ENCODE measurements at regions of chr7 and their contacts with region 1.

Region 1: DNA sequence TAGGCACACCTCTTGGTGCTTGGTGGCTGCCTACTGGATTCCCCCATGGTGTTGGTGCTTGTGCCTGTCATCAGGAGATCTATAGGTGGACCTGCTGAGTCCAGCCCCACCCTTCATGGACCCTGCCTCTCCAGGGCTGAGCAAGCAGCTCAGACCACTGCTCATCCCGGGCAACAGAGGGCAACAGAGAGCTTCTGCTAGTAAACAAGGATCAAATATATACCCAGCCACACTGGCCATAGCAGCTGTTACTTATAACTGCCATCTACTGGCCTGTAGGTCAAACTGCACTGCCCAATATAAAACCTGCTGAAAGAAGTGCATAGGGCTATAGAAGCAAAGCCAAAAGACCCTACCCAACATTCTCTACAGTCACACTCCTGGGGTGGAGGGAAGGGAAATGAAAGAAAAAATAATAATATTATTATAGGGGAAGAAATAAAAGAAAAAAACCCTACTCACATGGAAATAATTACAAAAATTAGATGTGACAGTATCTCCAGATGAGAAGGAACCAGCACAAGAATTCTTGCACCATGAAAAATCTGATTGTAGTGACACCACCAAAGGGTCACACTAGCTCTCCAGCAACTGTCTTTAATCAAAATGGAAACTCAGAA is 54.9 kb upstream of the ZNF800 start:
- DNase-seq: peak; percentile 76
- H3K4me3 Mint-ChIP-seq: no peak overlapping the region
- H3K27ac Mint-ChIP-seq: no peak overlapping the region
- H3K4me1 Mint-ChIP-seq: peaks cover 23% of the 10 kb centered on the region
- H3K27me3 Mint-ChIP-seq: peaks cover 33% of the 10 kb centered on the region

Region 2: DNA sequence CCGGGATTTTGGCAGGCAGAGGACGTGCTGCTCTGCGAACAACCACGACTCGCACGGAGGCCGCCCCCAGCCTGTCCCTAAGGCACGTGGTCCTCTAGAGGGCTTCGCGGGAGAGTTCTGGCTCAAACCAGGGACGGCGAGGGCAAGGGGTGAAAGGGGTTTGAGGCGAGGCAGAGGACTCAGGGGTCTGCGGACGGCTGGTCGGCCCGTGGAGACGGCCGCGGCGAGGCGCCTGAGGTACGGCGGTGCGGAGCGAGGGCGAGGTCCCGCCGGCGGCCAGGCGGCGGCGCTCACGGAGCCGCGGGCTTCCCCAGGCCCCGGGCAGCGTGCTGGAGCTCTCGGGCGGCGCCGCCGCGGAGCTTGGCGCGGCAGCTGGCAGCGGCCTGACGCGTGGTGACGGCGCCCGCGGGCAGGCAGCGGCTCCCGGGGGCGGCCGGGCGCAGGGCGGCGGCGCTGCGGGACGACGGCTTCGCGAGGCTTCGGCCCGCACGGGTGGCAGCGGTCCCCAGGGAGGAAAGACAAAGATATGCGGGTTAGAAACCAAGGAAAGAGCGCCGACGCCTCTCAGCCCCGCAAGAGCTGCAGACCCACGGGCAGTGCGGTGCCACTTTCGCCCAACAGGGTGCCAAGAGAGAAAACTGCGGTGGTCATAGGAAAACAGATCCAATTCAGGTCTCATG is 99.7 kb before region 1 on chr7:
- CTCF ChIA-PET with region 1: interaction called, 17 read pairs
- POLR2A ChIA-PET with region 1: no interaction called
- DNase-seq: peak; percentile 66
- H3K4me3 Mint-ChIP-seq: peak overlapping the region; percentile 18
- H3K27ac Mint-ChIP-seq: no peak overlapping the region
- H3K4me1 Mint-ChIP-seq: peaks cover 8% of the 10 kb centered on the region
- H3K27me3 Mint-ChIP-seq: peaks cover 13% of the 10 kb centered on the region